ENCODE measurements at regions of chr6 and their contacts with region 1.

Region 1: GRCh38 chr6:155406801-155407200 is 48.8 kb downstream of the NOX3 start:
- DNase-seq: no peak
- H3K4me3 ChIP-seq: no peak overlapping the region
- H3K27ac ChIP-seq: no peak overlapping the region
- H3K4me1 ChIP-seq: no peaks in the 10 kb centered on the region
- H3K27me3 ChIP-seq: peaks cover 2% of the 10 kb centered on the region
- CTCF ChIP-seq: peak in 1 of 2 donors; percentile 4

Region 2: GRCh38 chr6:155449450-155450239 is 42.8 kb after region 1 on chr6:
- CTCF ChIA-PET with region 1: no interaction called
- dilution Hi-C with region 1: no loop called
- in situ Hi-C with region 1: no loop called
- intact Hi-C with region 1: loop called (anchors 5 kb)
- DNase-seq: no peak
- H3K4me3 ChIP-seq: no peak overlapping the region
- H3K27ac ChIP-seq: no peak overlapping the region
- H3K4me1 ChIP-seq: peaks cover under 1% of the 10 kb centered on the region
- H3K27me3 ChIP-seq: no peaks in the 10 kb centered on the region
- CTCF ChIP-seq: no peak

Region 3: DNA sequence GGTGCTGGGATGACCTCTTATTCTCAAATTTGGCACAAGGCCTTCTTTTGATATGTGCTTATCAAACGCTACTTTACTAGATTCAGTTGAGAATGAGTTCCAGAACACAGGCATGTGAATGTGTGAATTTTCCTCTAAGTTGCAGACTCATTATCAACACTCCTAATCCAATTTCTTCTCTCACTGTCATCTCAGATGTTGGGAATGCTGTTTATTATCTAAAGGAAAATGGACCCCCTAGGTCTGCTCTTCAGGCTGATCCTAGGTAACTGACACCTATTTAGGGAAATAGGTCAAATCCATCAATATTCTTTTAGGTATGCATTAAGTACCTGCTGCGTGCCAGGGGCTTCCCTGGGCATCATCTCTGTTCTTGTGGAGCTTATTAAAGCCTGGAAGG is 263.9 kb after region 1 on chr6:
- CTCF ChIA-PET with region 1: no interaction called
- dilution Hi-C with region 1: no loop called
- in situ Hi-C with region 1: no loop called
- intact Hi-C with region 1: no loop called
- DNase-seq: no peak
- H3K4me3 ChIP-seq: no peak overlapping the region
- H3K27ac ChIP-seq: no peak overlapping the region
- H3K4me1 ChIP-seq: no peaks in the 10 kb centered on the region
- H3K27me3 ChIP-seq: no peaks in the 10 kb centered on the region
- CTCF ChIP-seq: no peak